IMR-90 (cell line): ENCODE measurements at regions of chr5 and their contacts with region 1.

Region 1: DNA sequence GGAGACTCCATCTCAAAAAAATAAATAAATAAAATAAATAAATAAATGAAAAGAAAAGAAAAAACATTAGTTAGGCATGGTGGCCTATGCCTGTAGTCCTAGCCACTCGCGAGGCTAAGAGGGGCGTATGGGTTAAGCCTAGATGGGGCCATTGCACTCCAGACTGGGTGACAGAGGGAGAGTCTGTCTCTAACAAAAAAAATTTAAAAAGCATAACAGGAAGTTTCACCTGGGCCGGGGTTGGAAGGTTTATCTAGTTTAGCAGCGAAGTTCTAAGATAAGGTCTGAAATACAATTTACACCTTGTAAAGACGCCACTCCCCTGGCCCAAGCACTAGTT is 18.0 kb downstream of the ZMAT2 start:
- DNase-seq: no peak
- ATAC-seq: no peak
- H3K4me3 ChIP-seq: no peak overlapping the region
- H3K27ac ChIP-seq: peak overlapping the region; percentile 66; the same call in 1 of the 2 replicates
- H3K4me1 ChIP-seq: 0 out of 2 replicates have a peak, but pooled peaks cover 2% of the 10 kb centered on the region
- H3K27me3 ChIP-seq: no peaks in the 10 kb centered on the region
- CTCF ChIP-seq: no peak
- POLR2A ChIP-seq: no peak
- RAD21 ChIP-seq: no peak

Region 2: DNA sequence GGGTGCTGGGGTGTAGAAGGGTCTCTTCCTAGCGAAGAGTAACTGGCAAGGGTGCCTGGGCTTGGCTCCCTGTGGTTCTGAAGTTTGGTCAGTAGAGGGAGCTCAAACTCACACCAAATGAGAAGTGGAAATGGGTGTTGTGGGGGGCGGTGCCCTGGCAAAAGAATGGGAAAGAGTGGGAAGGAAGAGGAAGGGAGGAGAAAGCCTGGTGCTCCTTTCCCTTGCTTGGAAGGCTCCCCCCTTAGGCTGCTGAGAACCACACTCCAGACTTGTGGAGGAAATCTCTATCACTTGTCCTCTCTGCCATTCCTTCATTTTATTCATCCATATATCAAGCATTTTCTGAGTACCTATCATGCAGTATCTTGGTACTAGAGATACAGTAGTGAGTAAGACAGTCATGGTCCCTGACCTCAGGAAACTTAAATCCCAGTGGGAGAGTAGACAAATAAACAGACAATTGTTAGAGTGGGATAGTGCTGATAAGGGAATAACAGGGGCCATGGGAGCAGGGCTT is 345.2 kb before region 1 on chr5:
- CTCF ChIA-PET with region 1: no interaction called
- POLR2A ChIA-PET with region 1: no interaction called
- dilution Hi-C with region 1: no loop called
- in situ Hi-C with region 1: no loop called
- intact Hi-C with region 1: loop called (anchors 1 kb)
- DNase-seq: peak; percentile 69
- ATAC-seq: peak; percentile 99
- H3K4me3 ChIP-seq: no peak overlapping the region
- H3K27ac ChIP-seq: no peak overlapping the region
- H3K4me1 ChIP-seq: no peaks in the 10 kb centered on the region
- H3K27me3 ChIP-seq: peaks cover 2% of the 10 kb centered on the region; the same call in 1 of the 2 replicates
- CTCF ChIP-seq: peak; percentile 65
- POLR2A ChIP-seq: no peak
- RAD21 ChIP-seq: peak; percentile 72

Region 3: DNA sequence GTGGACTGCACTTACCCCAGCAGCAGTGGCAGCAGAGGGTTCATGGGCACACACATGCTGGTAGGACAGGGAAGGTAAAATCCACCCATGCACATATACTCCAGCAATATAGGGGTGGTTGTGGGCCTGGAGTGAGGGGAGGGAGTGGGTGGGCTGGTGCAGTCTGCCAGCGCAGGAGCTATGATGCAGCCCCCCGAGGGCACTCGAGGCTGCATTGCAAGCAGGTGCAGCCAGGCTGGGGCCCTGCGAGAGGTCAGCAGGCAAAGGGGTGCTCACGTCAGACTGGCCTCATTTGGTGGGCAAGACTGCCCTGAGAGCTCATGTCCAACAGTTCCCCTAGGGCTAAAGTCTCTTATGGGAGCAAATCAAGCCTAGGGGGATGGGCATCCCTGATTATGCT is 35.4 kb after region 1 on chr5:
- CTCF ChIA-PET with region 1: no interaction called
- POLR2A ChIA-PET with region 1: no interaction called
- dilution Hi-C with region 1: no loop called
- in situ Hi-C with region 1: no loop called
- intact Hi-C with region 1: no loop called
- DNase-seq: no peak
- ATAC-seq: no peak
- H3K4me3 ChIP-seq: no peak overlapping the region
- H3K27ac ChIP-seq: no peak overlapping the region
- H3K4me1 ChIP-seq: no peaks in the 10 kb centered on the region
- H3K27me3 ChIP-seq: no peaks in the 10 kb centered on the region
- CTCF ChIP-seq: no peak
- POLR2A ChIP-seq: no peak
- RAD21 ChIP-seq: no peak